ENCODE measurements at regions of chr17 and their contacts with region 1.

Region 1: DNA sequence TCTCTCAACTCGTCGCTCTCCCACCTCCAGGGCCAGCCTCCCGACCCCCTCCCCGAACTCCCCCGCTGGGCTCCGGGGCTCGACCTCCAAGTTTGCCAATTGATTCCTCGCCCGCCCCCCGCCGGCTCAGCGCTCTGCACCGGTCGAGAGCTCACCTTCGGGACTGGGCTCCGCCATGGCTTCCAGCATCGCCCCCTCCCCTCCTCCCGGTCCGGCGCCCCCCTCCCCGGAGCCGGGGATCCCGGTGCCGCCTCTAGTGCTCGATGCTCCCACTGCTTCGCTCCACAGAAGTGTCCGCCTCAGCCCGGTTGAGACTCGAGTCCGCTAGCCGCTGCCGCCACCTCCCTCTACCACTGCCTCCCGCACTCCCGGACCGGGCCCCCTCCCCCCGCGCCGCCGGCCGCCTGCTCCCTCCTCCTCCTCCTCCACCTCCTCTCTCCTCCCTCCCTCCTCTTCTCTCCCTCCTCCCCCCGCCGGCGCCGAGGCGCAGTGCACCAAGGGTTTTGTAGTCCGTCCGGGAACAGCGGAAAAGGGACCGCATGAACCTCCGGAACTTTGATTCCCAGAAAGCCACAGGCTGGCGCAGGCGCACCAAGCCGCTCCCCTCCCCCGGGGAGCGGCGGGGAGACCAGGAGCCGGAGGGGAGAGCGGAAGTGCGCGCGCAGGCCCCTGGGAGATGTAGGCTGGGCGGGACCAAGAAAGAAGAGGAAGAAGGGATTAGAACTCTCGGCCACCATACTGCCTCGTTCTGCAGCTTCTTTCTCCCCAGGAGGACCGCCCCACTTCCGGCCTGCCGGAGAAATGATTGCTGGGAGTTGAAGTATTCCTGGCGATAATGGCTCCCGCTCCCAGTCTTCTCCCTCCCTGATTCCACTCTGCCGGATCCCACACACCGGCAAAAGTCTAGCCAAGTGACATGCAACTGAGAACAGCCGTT is at the start of gene PHF23:
- DNase-seq: peak; percentile 99
- ATAC-seq: peak; percentile 75 to 88 (median 82)
- H3K4me3 ChIP-seq: peak within 1 kb of the TSS; percentile 86 to 99 (median 96)
- H3K27ac ChIP-seq: peak within 1 kb of the TSS; percentile 76 to 100 (median 96)
- H3K4me1 ChIP-seq: peaks cover 14 to 56% (median 44%) of the 10 kb centered on the region in 9 donors
- H3K27me3 ChIP-seq: no peaks in the 10 kb centered on the region
- CTCF ChIP-seq: no peak
- total RNA-seq, gene PHF23: 17.7 to 24.5 (median 22.6) TPM

Region 2: GRCh38 chr17:6610011-6610410 is 629.3 kb before region 1 on chr17:
- intact Hi-C with region 1: no loop called
- DNase-seq: no peak
- ATAC-seq: no peak
- H3K4me3 ChIP-seq: no peak overlapping the region
- H3K27ac ChIP-seq: no peak overlapping the region
- H3K4me1 ChIP-seq: no peaks in the 10 kb centered on the region
- H3K27me3 ChIP-seq: no peaks in the 10 kb centered on the region
- CTCF ChIP-seq: no peak

Region 3: GRCh38 chr17:7191571-7192270 is 47.6 kb before region 1 on chr17:
- intact Hi-C with region 1: no loop called
- DNase-seq: peak in 1 of 2 donors; percentile 63
- ATAC-seq: peak; percentile 52 to 82 (median 77)
- H3K4me3 ChIP-seq: no peak overlapping the region
- H3K27ac ChIP-seq: no peak overlapping the region
- H3K4me1 ChIP-seq: no peaks in the 10 kb centered on the region
- H3K27me3 ChIP-seq: no peaks in the 10 kb centered on the region
- CTCF ChIP-seq: no peak

Region 4: GRCh38 chr17:7214300-7215135 is 24.8 kb before region 1 on chr17:
- intact Hi-C with region 1: loop called in 2 of 10 experiments (anchors 2 kb)
- DNase-seq: peak; percentile 99
- ATAC-seq: peak; percentile 89 to 94 (median 92)
- H3K4me3 ChIP-seq: peak overlapping the region; percentile 8 to 71 (median 60)
- H3K27ac ChIP-seq: peak overlapping the region in 9 of 10 donors; percentile 53 to 98 (median 69)
- H3K4me1 ChIP-seq: peaks cover 17 to 61% (median 52%) of the 10 kb centered on the region in 9 donors
- H3K27me3 ChIP-seq: no peaks in the 10 kb centered on the region
- CTCF ChIP-seq: peak in 8 of 9 donors; percentile 28 to 75 (median 54)

Region 5: DNA sequence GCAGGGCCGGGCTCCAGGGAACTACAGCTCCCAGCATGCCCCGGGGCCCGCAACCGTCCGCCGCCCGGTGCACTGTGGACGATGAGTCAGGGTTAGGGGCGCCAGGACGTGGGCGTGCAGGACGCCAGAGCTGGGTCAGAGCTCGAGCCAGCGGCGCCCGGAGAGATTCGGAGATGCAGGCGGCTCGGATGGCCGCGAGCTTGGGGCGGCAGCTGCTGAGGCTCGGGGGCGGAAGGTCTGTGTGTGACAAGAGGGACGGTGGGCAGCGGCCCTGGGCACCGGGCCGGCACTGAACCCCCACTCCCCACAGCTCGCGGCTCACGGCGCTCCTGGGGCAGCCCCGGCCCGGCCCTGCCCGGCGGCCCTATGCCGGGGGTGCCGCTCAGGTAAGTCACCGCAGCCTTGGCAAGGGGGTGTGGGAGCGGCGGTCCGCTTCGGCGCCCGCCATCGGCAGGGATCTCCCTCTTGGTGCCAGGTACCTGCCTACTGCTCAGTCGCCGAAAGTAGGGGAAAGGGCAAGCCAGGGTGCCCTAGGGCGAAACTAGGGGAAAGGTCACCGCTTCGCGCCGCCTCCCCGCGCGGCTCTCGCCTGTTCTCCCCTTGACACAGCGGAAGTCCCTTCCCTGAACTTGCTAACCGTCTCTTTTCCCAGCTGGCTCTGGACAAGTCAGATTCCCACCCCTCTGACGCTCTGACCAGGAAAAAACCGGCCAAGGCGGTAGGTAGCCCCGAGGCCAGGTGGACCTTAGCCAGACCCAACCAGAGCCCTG is 19.4 kb before region 1 on chr17 and contains the starts of genes ACADVL and DLG4:
- intact Hi-C with region 1: loop called in 2 of 10 experiments (anchors 2 kb)
- DNase-seq: peak; percentile 91 to 94
- ATAC-seq: peak; percentile 82 to 89 (median 86)
- H3K4me3 ChIP-seq: peak within 1 kb of the TSS; percentile 63 to 99 (median 88)
- H3K27ac ChIP-seq: peak within 1 kb of the TSS; percentile 91 to 100 (median 98)
- H3K4me1 ChIP-seq: peaks cover 16 to 85% (median 60%) of the 10 kb centered on the region in 9 donors
- H3K27me3 ChIP-seq: no peaks in the 10 kb centered on the region
- CTCF ChIP-seq: no peak
- total RNA-seq, gene ACADVL: 951 to 2,054 (median 1,322) TPM
- total RNA-seq, gene DLG4: 13.0 to 22.1 (median 16.7) TPM

Region 6: GRCh38 chr17:7380321-7380720 is 141.0 kb after region 1 on chr17:
- intact Hi-C with region 1: no loop called
- DNase-seq: peak; percentile 54 to 73
- ATAC-seq: peak; percentile 61 to 89 (median 82)
- H3K4me3 ChIP-seq: peak overlapping the region in 9 of 10 donors; percentile 31 to 59 (median 50)
- H3K27ac ChIP-seq: peak overlapping the region in 9 of 10 donors; percentile 23 to 79 (median 67)
- H3K4me1 ChIP-seq: peaks cover 6 to 33% (median 30%) of the 10 kb centered on the region in 9 donors
- H3K27me3 ChIP-seq: peaks cover 0 to 61% (median 0%) of the 10 kb centered on the region in 7 donors
- CTCF ChIP-seq: peak in 1 of 9 donors; percentile 7

Measured in heart right ventricle (tissue), 16 donors.